Esophagus muscularis mucosa (tissue), 4 donors: ENCODE measurements at regions of chr9 and their contacts with region 1.

Region 1: GRCh38 chr9:96654443-96655197 is 497 bp downstream of the PRXL2C start:
- DNase-seq: peak; percentile 95
- H3K4me3 ChIP-seq: peak overlapping the region; percentile 72 to 82 (median 73)
- H3K27ac ChIP-seq: peak overlapping the region; percentile 97 to 99 (median 98)
- H3K4me1 ChIP-seq: peaks cover 26 to 40% (median 30%) of the 10 kb centered on the region in 4 donors
- H3K27me3 ChIP-seq: no peaks in the 10 kb centered on the region
- CTCF ChIP-seq: peak in 2 of 3 experiments; percentile 31 to 33
- EP300 ChIP-seq: no peak
- POLR2A ChIP-seq: peak; percentile 28

Region 2: GRCh38 chr9:96344458-96345180 is 310.0 kb before region 1 on chr9:
- intact Hi-C with region 1: no loop called
- DNase-seq: peak; percentile 94
- H3K4me3 ChIP-seq: no peak overlapping the region
- H3K27ac ChIP-seq: peak overlapping the region; percentile 48 to 71 (median 62)
- H3K4me1 ChIP-seq: peaks cover 19 to 44% (median 29%) of the 10 kb centered on the region in 4 donors
- H3K27me3 ChIP-seq: no peaks in the 10 kb centered on the region
- CTCF ChIP-seq: no peak
- EP300 ChIP-seq: no peak
- POLR2A ChIP-seq: no peak

Region 3: GRCh38 chr9:96449845-96450612 is 204.6 kb before region 1 on chr9 and contains the start of gene HABP4:
- intact Hi-C with region 1: loop called (anchors 10 kb)
- DNase-seq: peak; percentile 98
- H3K4me3 ChIP-seq: peak within 1 kb of the TSS; percentile 76 to 92 (median 83)
- H3K27ac ChIP-seq: peak within 1 kb of the TSS; percentile 88 to 97 (median 94)
- H3K4me1 ChIP-seq: peaks cover 7 to 42% (median 36%) of the 10 kb centered on the region in 4 donors
- H3K27me3 ChIP-seq: no peaks in the 10 kb centered on the region
- CTCF ChIP-seq: no peak
- EP300 ChIP-seq: no peak
- POLR2A ChIP-seq: peak; percentile 49
- total RNA-seq, gene HABP4: 38.4 to 97.2 (median 54.2) TPM

Region 4: GRCh38 chr9:96553070-96553469 is 101.5 kb before region 1 on chr9:
- intact Hi-C with region 1: loop called (anchors 5 kb)
- DNase-seq: no peak
- H3K4me3 ChIP-seq: no peak overlapping the region
- H3K27ac ChIP-seq: peak overlapping the region in 3 of 4 donors; percentile 12 to 56 (median 21)
- H3K4me1 ChIP-seq: peaks cover 4 to 26% (median 12%) of the 10 kb centered on the region in 4 donors
- H3K27me3 ChIP-seq: no peaks in the 10 kb centered on the region
- CTCF ChIP-seq: no peak
- EP300 ChIP-seq: no peak
- POLR2A ChIP-seq: no peak

Region 5: DNA sequence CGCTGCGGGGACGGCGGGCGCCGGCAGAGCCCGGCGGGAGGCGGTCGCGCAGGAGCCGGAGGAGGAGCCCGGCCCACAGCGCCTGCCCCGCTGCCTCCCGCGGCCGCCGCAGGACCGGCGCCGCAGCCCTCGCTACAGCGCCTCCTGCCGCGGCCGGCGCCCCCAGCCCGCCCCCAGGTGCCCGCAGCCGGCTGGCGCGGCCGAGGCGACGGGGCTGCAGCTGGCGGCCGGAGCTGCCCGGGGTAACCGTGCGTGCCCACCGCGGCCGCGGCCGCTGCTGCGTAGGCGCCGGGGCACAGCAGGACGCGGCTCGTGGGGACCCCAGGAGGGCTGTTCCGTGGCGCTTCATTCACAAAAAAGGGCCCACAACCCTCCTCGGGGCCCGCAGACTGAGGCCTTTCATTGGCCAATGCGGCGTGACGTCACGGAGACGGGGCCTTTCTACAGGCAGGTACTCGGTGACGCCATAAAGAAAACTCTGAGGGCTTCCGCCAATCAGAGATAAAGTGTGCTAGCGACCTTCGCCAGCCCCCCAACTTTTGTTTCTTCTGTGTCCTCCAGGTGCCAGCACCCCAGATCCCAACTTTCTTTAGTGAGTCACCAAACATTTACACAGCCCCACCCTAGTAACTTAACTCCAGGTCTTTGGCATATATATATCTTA is 35.0 kb before region 1 on chr9 and contains the start of gene CDC14B:
- intact Hi-C with region 1: loop called (anchors 5 kb)
- DNase-seq: peak; percentile 94
- H3K4me3 ChIP-seq: peak within 1 kb of the TSS; percentile 89 to 93 (median 92)
- H3K27ac ChIP-seq: peak within 1 kb of the TSS; percentile 85 to 92 (median 88)
- H3K4me1 ChIP-seq: peaks cover 0 to 22% (median 19%) of the 10 kb centered on the region in 4 donors
- H3K27me3 ChIP-seq: no peaks in the 10 kb centered on the region
- CTCF ChIP-seq: peak in 2 of 3 experiments; percentile 29 to 43
- EP300 ChIP-seq: no peak
- POLR2A ChIP-seq: no peak
- total RNA-seq, gene CDC14B: 22.0 to 39.7 (median 27.0) TPM

Region 6: DNA sequence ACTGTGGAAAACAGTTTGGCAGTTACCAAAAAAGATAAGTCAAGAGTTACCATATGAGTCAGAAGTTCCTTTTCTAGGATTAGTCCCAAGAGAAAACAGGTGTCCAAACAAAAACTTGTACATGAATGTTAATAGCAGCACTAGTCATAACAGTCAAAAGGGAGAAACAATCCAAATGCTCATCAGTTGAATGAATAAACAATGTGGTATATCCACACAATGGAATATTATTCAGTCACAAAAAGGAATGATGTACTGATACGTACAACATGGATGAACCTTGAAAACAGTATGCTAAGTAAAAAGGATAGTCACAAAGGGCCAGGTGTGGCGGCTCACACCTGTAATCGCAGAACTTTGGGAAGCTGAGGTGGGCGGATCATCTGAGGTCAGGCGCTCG is 115.4 kb after region 1 on chr9:
- intact Hi-C with region 1: no loop called
- DNase-seq: no peak
- H3K4me3 ChIP-seq: no peak overlapping the region
- H3K27ac ChIP-seq: no peak overlapping the region
- H3K4me1 ChIP-seq: no peaks in the 10 kb centered on the region
- H3K27me3 ChIP-seq: no peaks in the 10 kb centered on the region
- CTCF ChIP-seq: no peak
- EP300 ChIP-seq: no peak
- POLR2A ChIP-seq: no peak

Region 7: GRCh38 chr9:96854073-96854876 is 199.7 kb after region 1 on chr9 and contains the start of gene ZNF782:
- intact Hi-C with region 1: no loop called
- DNase-seq: peak; percentile 98
- H3K4me3 ChIP-seq: peak within 1 kb of the TSS; percentile 76 to 85 (median 82)
- H3K27ac ChIP-seq: peak within 1 kb of the TSS; percentile 78 to 91 (median 87)
- H3K4me1 ChIP-seq: peaks cover 10 to 35% (median 33%) of the 10 kb centered on the region in 4 donors
- H3K27me3 ChIP-seq: no peaks in the 10 kb centered on the region
- CTCF ChIP-seq: peak in 2 of 3 experiments; percentile 11 to 23
- EP300 ChIP-seq: no peak
- POLR2A ChIP-seq: no peak
- total RNA-seq, gene ZNF782: 5.8 to 17.0 (median 7.5) TPM

Region 8: GRCh38 chr9:97076238-97076637 is 421.6 kb after region 1 on chr9:
- intact Hi-C with region 1: no loop called
- DNase-seq: no peak
- H3K4me3 ChIP-seq: no peak overlapping the region
- H3K27ac ChIP-seq: no peak overlapping the region
- H3K4me1 ChIP-seq: peaks cover 0 to 10% (median 7%) of the 10 kb centered on the region in 4 donors
- H3K27me3 ChIP-seq: peaks cover 0 to 65% (median 22%) of the 10 kb centered on the region in 4 donors
- CTCF ChIP-seq: no peak
- EP300 ChIP-seq: no peak
- POLR2A ChIP-seq: no peak